ENCODE measurements at regions of chr3 and their contacts with region 1.

Region 1: GRCh38 chr3:42572278-42572677 is 9.5 kb downstream of the SEC22C start:
- H3K4me3 Mint-ChIP-seq: no peak overlapping the region
- H3K27ac Mint-ChIP-seq: no peak overlapping the region
- H3K4me1 Mint-ChIP-seq: peaks cover 11% of the 10 kb centered on the region
- H3K27me3 Mint-ChIP-seq: no peaks in the 10 kb centered on the region

Region 2: GRCh38 chr3:42476225-42477125 is 95.8 kb before region 1 on chr3:
- intact Hi-C with region 1: no loop called
- H3K4me3 Mint-ChIP-seq: no peak overlapping the region
- H3K27ac Mint-ChIP-seq: peak overlapping the region; percentile 22
- H3K4me1 Mint-ChIP-seq: peaks cover 32% of the 10 kb centered on the region
- H3K27me3 Mint-ChIP-seq: peaks cover 30% of the 10 kb centered on the region

Region 3: GRCh38 chr3:42613462-42613861 is 41.2 kb after region 1 on chr3:
- intact Hi-C with region 1: loop called (anchors 5 kb)
- H3K4me3 Mint-ChIP-seq: no peak overlapping the region
- H3K27ac Mint-ChIP-seq: no peak overlapping the region
- H3K4me1 Mint-ChIP-seq: peaks cover 11% of the 10 kb centered on the region
- H3K27me3 Mint-ChIP-seq: no peaks in the 10 kb centered on the region

Region 4: DNA sequence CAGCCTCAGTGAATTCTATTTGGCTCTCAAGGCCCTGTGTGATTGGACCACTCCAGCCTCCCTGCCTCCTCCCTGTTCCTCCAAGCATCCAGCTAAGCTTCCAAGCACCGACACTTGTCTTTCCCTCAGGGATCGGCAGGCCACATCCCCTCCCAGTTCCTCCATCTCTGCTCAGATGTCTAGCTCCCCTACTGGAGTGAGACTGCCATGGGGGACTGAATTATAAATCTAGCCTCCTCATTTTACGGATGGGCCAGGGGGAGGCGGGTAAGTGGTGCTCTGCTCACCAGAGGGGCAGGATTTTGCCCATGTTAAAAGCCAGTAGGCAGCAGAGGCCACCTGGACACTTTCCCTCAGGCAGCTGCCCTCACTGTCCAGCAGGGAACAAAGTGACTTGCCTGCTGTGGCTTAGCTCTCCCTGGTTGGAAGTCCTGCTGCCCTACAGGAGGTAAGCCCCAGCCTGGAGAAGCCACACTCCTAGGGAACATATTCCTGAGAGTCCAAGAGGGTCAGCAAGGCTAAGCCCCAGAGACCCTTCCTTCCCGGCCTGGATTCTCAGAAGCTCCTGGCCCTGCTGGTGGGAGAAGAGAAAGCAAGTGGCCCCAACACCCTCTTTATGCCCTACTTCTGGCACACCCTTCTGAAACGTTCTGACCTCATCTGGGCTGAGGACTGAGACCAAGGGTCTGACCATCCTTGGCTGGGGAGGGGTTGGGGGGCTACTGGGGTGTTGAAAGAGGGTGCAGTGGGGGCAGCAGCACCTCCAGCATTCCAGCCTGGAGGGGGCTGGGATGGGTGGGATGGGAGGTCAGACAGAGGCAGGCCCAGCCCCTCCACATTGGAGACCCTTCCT is 139.4 kb after region 1 on chr3:
- intact Hi-C with region 1: no loop called
- H3K4me3 Mint-ChIP-seq: no peak overlapping the region
- H3K27ac Mint-ChIP-seq: no peak overlapping the region
- H3K4me1 Mint-ChIP-seq: peaks cover 11% of the 10 kb centered on the region
- H3K27me3 Mint-ChIP-seq: no peaks in the 10 kb centered on the region

Region 5: DNA sequence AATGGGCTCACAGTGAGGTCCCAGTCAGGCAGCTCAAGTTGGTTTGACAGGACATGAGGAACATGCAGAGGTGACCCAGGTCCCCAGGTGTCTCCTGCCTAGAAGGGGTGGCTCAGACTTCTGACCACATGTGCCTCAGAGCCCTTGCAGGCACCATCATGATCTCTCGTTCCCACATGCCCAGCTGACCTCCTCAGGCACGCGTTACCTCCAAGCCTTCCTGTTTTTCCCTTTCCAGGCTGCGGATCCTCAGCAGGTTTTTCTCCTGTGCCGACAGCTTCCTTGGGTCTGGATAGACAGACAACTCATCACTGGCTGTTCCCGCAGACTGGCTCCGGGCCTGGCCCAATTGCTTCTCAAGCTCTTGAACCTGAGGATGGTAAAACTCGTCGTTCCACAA is 170.4 kb after region 1 on chr3:
- intact Hi-C with region 1: loop called (anchors 2 kb)
- H3K4me3 Mint-ChIP-seq: no peak overlapping the region
- H3K27ac Mint-ChIP-seq: no peak overlapping the region
- H3K4me1 Mint-ChIP-seq: peaks cover 27% of the 10 kb centered on the region
- H3K27me3 Mint-ChIP-seq: no peaks in the 10 kb centered on the region

Measured in dendritic cell treated with granulocyte-macrophage colony-stimulating factor and Interleukin-4, amounts not matched to agents 40 ng/mL and 50 ng/mL, for 4 days (primary cell).